Activated CD4-positive, alpha-beta memory T cell treated with anti-CD3 and anti-CD28 coated beads for 36 hours (primary cell): ENCODE measurements at regions of chr3 and their contacts with region 1.

Region 1: DNA sequence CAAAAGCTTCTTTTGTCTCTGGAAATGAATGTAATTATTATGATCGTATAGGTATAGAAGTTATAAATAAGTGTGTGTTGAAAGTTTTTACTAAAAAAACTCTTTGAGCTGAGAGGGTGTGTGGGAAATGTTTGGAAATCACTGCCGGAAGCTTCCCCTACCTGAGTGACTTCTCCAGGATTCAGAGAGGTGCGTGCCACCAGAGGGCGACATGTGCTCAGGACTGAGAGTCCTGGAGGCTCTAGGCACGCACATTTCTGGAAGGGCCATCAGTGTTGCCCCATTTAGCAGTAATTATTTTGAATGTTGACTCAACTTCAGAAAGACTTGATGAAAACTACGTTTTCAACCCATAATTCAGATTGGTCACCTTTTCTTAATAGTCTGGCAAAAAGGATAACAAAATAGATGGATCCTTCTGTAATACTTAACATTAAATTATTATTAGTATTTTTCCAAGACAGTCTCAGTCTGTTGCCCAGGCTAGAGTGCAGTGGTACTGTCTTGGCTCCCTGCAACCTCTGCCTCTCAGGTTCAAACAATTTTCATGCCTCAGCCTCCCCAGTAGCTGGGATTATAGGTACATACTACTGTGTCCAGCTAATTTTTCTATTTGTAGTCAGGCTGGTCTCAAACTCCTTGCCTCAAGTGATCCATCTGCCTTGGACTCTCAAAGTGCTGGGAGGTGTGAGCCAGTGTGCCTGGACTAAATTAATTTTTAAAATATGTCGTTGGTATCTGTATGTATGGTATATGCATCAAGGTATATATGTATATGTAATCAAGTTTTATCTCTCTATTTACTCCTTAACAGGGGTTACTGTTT is 34.5 kb downstream of the GPR171 start:
- DNase-seq: peak; percentile 89
- H3K4me3 Mint-ChIP-seq: no peak overlapping the region
- H3K27ac Mint-ChIP-seq: no peak overlapping the region
- H3K4me1 Mint-ChIP-seq: peaks cover 42% of the 10 kb centered on the region
- H3K27me3 Mint-ChIP-seq: peaks cover 2% of the 10 kb centered on the region

Region 2: DNA sequence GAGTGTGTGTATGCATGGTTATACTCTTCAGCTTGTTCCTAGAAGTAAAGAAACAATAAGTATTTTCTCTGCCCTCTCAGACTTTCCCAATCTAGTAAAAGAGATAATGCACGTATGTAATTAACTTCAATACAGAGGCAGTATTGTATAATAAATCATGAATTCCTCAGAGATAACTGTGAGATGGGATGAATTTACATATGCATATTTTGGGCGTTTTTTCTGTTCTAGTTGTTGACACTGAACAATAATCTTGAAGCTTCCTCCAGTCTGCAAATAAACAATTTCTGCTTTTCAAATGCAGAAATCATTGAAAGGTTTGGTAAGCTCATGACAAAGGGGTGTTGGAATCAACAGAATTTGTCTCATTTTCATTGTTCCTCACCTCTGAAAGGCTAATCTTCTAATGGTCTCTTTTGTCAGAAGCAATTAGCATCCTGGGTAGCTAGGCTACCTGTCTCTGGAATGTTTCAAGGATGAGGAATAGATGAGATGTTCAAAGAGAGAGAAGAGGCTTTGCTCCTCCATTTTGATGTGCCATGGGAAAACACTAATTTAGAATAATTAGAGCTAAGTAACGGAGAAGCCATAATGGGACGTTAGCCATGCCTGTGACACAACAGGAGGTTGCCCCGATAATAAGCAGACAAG is 362.2 kb before region 1 on chr3:
- CTCF ChIA-PET with region 1: no interaction called
- POLR2A ChIA-PET with region 1: no interaction called
- intact Hi-C with region 1: no loop called
- DNase-seq: no peak
- H3K4me3 Mint-ChIP-seq: no peak overlapping the region
- H3K27ac Mint-ChIP-seq: no peak overlapping the region
- H3K4me1 Mint-ChIP-seq: no peaks in the 10 kb centered on the region
- H3K27me3 Mint-ChIP-seq: peaks cover 5% of the 10 kb centered on the region

Region 3: DNA sequence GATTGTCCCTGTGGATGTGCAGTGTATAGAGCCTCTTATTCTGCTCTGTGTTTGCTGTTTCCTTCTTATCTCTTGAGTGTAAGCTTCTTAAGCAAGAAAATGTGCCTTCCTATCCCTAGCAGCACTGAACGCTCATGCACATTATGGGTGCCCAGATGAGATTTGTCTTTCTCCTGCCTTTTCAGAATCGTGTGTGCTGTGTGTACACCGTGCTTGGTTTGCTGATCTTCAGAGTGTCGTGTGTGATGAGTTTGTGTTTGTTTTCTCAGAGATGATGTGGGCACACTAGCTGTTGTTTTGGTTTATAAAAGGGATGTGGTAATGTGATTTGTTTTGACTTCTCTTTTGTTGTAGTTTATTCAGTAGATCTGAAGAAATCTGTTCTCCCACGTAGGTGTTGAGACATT is 14.8 kb after region 1 on chr3:
- CTCF ChIA-PET with region 1: interaction called, 11 read pairs
- POLR2A ChIA-PET with region 1: interaction called, 3 read pairs
- intact Hi-C with region 1: loop called (anchors 1 kb)
- DNase-seq: no peak
- H3K4me3 Mint-ChIP-seq: peak overlapping the region; percentile 64
- H3K27ac Mint-ChIP-seq: peak overlapping the region; percentile 73
- H3K4me1 Mint-ChIP-seq: peaks cover 43% of the 10 kb centered on the region
- H3K27me3 Mint-ChIP-seq: no peaks in the 10 kb centered on the region

Region 4: DNA sequence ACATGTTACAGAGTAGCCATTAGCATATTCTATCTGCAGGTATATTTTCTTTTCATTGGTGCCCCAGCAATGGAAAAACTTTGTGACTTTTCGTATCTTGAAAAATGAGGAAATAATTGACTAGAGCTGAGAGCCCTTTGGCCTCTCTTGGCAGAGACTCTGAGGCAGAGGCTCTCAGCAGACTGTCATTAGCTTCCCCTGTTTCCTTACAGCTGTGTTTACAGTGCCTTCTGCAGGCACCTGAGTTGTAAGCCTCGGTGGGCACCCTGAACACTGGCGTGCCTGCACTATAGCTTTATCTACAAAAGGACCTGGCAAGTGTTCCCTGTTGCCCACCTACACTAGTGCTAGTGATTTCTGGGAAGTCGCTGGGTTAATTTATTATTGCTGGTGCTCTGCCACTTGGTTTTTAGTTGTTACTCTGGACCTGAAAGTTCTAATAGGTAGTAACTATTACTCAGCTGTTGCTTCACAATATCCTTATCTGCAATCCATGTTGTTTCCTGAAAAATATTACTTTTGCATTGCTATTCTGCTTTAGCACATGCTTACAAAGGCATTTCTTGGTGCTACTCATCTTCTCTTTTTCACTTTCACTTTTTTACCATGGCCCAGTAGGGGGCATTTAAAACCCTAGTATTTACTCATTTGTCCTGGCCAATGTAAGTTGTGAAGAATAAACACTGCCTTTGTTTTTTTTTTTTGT is 42.3 kb after region 1 on chr3:
- CTCF ChIA-PET with region 1: interaction called, 15 read pairs
- POLR2A ChIA-PET with region 1: interaction called, 5 read pairs
- intact Hi-C with region 1: loop called (anchors 1 kb)
- DNase-seq: no peak
- H3K4me3 Mint-ChIP-seq: peak overlapping the region; percentile 62
- H3K27ac Mint-ChIP-seq: peak overlapping the region; percentile 91
- H3K4me1 Mint-ChIP-seq: peaks cover 61% of the 10 kb centered on the region
- H3K27me3 Mint-ChIP-seq: no peaks in the 10 kb centered on the region

Region 5: DNA sequence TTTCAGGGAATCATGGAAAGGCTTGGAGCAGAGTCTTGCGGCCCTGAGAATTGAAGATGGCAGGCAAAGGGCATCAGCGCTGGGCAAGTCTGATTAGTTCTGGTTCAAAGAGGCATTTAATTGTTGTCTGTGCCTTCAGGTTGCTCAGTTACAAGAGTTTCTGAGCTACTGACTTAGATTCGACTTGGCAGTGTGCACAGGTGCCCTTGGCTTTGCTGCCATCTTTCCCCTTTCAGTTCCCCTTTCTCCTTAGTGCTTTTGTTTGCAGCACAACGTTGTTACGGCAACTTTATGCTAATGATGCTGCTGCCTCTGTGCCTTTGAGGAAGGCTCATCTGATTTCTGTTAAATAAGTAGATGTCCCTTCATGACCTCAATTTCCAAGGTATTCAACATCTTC is 97.4 kb after region 1 on chr3:
- CTCF ChIA-PET with region 1: interaction called, 10 read pairs
- POLR2A ChIA-PET with region 1: no interaction called
- intact Hi-C with region 1: no loop called
- DNase-seq: no peak
- H3K4me3 Mint-ChIP-seq: no peak overlapping the region
- H3K27ac Mint-ChIP-seq: no peak overlapping the region
- H3K4me1 Mint-ChIP-seq: peaks cover 19% of the 10 kb centered on the region
- H3K27me3 Mint-ChIP-seq: no peaks in the 10 kb centered on the region

Region 6: DNA sequence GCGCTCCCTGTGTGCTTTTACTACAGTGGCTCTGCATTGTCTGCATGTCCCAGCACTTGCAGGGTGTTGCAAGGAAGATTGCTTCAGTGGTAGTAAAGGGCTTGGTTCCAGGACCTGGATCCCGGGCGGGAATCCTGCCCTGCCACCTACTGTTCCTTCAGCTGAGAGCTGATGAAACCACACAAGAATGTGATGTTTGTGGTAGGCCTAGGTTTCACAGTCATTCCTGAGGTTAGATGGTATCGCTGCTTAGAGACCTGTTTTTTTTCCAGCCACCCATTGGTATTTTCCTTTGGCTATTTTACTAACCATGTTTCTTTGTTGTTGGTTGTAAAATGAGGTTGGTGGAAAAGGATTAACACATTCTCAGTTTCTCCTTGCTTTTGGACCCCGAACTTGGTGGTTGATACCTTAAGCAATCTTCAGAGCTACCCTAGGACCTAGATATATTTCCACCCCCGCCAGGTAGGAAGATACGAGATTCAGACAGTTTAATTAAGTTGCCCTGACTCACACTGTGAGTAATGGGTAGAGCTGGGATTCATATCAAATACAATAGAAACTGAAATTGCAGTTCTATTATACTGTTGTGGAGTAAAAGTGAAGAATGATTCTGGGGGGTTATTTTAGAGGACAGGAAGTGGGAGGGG is 136.7 kb after region 1 on chr3:
- CTCF ChIA-PET with region 1: interaction called, 7 read pairs
- POLR2A ChIA-PET with region 1: interaction called, 3 read pairs
- intact Hi-C with region 1: loop called (anchors 1 kb)
- DNase-seq: peak; percentile 52
- H3K4me3 Mint-ChIP-seq: peak overlapping the region; percentile 20
- H3K27ac Mint-ChIP-seq: peak overlapping the region; percentile 56
- H3K4me1 Mint-ChIP-seq: peaks cover 78% of the 10 kb centered on the region
- H3K27me3 Mint-ChIP-seq: peaks cover 17% of the 10 kb centered on the region

Region 7: DNA sequence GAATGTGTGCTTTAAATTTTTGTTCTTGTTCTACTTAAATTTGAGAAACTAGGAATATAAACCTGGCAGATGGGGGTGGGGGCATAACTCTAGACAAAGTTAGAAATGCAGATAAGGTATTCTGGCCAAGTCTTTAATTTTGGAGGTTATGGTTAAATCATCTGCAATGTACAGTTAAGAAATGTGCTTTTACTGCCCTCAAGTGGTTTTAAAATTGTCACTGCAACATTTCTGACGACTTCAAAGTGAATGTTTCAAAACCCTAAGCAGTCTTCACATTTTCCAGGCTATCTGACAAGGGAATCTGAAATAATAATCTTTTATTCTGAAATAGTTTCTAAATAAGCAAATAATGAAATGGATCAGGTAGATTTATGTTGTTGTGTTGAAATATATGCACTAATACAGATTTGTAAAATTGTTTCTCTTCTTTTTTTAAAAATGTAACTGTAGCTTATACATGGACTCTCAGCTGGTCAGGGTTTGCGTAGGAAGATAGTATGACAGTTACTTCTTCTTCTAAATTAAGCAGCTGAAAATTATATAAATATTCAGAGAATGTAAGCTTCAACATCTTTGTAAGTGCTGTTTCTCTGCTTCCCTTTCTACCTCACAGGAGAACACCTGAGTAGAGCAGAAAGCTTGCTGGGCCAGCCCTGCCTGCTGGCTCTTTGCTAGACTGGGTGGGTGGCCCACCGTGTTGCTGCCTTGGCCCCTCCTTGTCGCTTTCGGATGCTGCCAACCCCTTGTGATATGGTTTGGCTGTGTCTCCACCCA is 750.0 kb after region 1 on chr3:
- CTCF ChIA-PET with region 1: interaction called, 5 read pairs
- POLR2A ChIA-PET with region 1: no interaction called
- intact Hi-C with region 1: loop called (anchors 5 kb)
- DNase-seq: no peak
- H3K4me3 Mint-ChIP-seq: no peak overlapping the region
- H3K27ac Mint-ChIP-seq: no peak overlapping the region
- H3K4me1 Mint-ChIP-seq: no peaks in the 10 kb centered on the region
- H3K27me3 Mint-ChIP-seq: no peaks in the 10 kb centered on the region